CD4-positive, alpha-beta memory T cell (primary cell): ENCODE measurements at regions of chr3 and their contacts with region 1.

Region 1: GRCh38 chr3:168095611-168096209 is at the start of gene GOLIM4:
- DNase-seq: peak in 4 of 5 donors; percentile 10 to 42 (median 16)
- H3K4me3 ChIP-seq: peak within 1 kb of the TSS in 1 of 2 donors; percentile 32
- H3K4me3 Mint-ChIP-seq: peak within 1 kb of the TSS; percentile 68 to 89 (median 85)
- H3K27ac ChIP-seq: no peak within 1 kb of the TSS
- H3K27ac Mint-ChIP-seq: peak within 1 kb of the TSS in 1 of 7 donors; percentile 8
- H3K4me1 ChIP-seq: peaks cover 15% of the 10 kb centered on the region
- H3K4me1 Mint-ChIP-seq: peaks cover 7 to 14% (median 11%) of the 10 kb centered on the region in 4 donors
- H3K27me3 ChIP-seq: no peaks in the 10 kb centered on the region
- H3K27me3 Mint-ChIP-seq: peaks cover 26% of the 10 kb centered on the region in 2 donors
- total RNA-seq, gene GOLIM4: 0.25 to 0.52 TPM

Region 2: GRCh38 chr3:167626490-167626889 is 469.2 kb before region 1 on chr3:
- CTCF ChIA-PET with region 1: no interaction called
- POLR2A ChIA-PET with region 1: no interaction called
- intact Hi-C with region 1: no loop called
- DNase-seq: no peak
- H3K4me3 ChIP-seq: no peak overlapping the region
- H3K4me3 Mint-ChIP-seq: no peak overlapping the region
- H3K27ac ChIP-seq: no peak overlapping the region
- H3K27ac Mint-ChIP-seq: no peak overlapping the region
- H3K4me1 ChIP-seq: no peaks in the 10 kb centered on the region
- H3K4me1 Mint-ChIP-seq: no peaks in the 10 kb centered on the region
- H3K27me3 ChIP-seq: no peaks in the 10 kb centered on the region
- H3K27me3 Mint-ChIP-seq: peaks cover 3 to 5% of the 10 kb centered on the region in 2 donors

Region 3: DNA sequence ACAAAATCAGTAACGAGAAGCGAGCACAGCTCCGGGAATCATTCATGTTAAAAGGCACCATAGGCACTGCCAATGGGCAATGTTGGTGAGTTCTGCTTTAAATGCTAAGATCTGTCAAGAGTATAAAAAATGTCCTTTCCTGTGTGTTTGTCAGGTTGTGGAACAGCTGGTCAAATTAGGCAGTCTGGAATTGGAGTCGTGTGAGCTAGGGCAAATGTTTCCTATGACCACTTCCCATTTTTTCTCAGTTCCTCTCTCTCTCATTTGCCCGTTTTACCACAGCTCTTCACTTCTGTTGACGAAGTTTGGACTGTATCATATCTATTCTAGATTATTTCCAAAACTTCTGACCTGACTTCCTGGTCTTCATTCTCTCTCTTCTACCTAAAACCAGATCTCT is 60.8 kb after region 1 on chr3:
- CTCF ChIA-PET with region 1: no interaction called
- POLR2A ChIA-PET with region 1: no interaction called
- intact Hi-C with region 1: loop called (anchors 10 kb)
- DNase-seq: no peak
- H3K4me3 ChIP-seq: no peak overlapping the region
- H3K4me3 Mint-ChIP-seq: no peak overlapping the region
- H3K27ac ChIP-seq: no peak overlapping the region
- H3K27ac Mint-ChIP-seq: no peak overlapping the region
- H3K4me1 ChIP-seq: no peaks in the 10 kb centered on the region
- H3K4me1 Mint-ChIP-seq: no peaks in the 10 kb centered on the region
- H3K27me3 ChIP-seq: no peaks in the 10 kb centered on the region
- H3K27me3 Mint-ChIP-seq: peaks cover 2 to 7% of the 10 kb centered on the region in 2 donors